AG04449 (cell line): ENCODE measurements at regions of chr3 and their contacts with region 1.

Region 1: DNA sequence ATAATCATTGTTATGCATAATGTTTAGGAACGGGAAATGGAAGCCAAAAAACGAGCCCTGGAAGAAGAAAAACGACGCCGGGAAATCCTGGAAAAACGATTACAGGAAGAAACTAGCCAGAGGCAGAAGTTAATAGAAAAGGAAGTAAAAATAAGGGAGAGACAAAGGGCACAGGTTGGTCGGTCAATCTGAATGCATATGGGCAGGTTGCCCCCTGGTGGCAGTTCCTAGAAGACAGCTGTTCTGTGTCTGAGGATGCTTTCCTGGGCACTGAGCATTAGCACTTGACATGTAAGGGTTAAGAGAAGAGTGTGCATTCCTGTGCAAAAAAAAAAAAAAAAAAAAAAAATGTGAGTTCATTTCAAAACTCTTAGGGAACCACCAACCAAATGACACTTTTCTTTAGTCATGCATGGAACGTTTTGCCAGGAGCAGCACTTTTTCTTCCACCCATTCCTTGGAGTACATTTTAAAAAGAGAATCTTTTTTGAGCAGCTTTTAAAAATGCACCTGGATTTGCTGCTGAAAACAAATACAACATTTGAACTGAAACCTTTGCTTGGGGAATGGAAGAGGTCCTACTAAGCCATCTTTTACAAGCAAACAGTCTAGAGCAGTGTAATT is 11.1 kb upstream of the ABHD10 start:
- DNase-seq: peak; percentile 65
- H3K4me3 ChIP-seq: no peak overlapping the region
- CTCF ChIP-seq: peak; percentile 87

Region 2: GRCh38 chr3:111859974-111860859 is 107.5 kb before region 1 on chr3:
- CTCF ChIA-PET with region 1: interaction called, 144 read pairs
- POLR2A ChIA-PET with region 1: interaction called, 4 read pairs
- DNase-seq: no peak
- H3K4me3 ChIP-seq: peak overlapping the region; percentile 81
- CTCF ChIP-seq: peak; percentile 56

Region 3: DNA sequence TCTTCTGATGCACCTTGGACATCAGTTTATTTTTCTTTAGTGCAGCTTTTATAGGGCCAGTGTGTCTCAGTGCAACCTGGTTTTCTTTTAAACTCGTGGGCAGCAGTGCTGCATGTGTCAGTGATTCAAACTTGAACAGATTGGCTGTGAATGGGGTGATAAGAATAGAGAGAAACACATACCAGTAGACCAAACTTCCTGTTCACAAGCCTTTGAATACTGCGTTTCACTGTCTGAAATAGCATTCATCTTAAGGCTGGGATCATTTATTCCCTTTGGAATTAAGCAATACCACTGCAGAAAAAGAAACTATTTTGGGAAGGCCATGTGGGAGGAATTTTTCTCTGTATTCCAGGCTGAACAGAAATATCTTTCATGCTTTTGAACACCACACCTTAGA is 57.0 kb before region 1 on chr3:
- CTCF ChIA-PET with region 1: interaction called, 18 read pairs
- POLR2A ChIA-PET with region 1: no interaction called
- DNase-seq: peak; percentile 71
- H3K4me3 ChIP-seq: no peak overlapping the region
- CTCF ChIP-seq: no peak

Region 4: DNA sequence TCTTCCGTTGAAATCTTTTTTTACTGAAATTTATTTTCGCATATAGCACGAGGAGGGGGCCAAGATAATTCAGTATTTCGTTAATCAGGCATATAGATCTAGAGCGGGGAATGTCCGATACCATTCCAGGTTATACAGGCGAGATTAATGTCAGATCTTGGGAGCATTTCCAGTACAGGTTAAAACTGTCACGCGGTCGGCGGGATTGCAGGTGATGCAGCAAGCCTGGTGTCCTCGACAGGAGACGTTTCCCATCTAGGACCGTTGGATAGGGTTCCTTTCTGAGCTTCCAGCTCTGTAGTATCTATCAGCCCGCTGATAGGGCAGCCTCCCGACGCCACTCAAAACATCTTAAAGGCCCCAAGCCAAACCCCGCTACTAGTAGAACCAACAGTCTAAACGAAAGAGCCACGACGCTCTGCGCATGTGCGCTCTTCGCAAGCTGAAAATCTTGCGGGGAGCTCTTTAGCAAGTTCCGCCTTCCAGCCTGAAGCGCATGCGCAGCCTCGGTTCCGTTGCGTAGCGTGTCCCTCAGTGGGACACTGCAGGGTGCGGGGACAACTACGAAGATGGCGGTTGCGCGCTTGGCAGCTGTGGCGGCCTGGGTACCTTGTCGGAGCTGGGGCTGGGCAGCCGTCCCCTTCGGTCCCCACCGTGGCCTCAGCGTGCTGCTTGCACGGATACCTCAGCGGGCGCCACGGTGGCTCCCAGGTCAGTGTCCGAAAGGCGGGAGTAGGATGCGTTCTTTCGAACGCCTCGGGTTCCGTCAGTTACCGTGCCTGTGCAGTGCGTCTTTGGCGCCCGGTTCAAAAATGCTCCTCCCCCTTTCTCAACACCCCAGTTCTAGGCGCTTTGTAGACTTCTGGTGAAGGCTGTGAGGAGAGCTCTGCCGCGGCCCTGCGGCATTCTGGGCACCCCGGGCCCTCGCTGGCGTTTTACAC is 11.0 kb after region 1 on chr3 and contains the start of gene ABHD10:
- CTCF ChIA-PET with region 1: interaction called, 45 read pairs
- POLR2A ChIA-PET with region 1: no interaction called
- DNase-seq: peak; percentile 84
- H3K4me3 ChIP-seq: peak within 1 kb of the TSS; percentile 89
- CTCF ChIP-seq: no peak